Activated B cell treated with CpG ODN at 0.5 μM for 24 hours (primary cell): ENCODE measurements at regions of chrX and their contacts with region 1.

Region 1: DNA sequence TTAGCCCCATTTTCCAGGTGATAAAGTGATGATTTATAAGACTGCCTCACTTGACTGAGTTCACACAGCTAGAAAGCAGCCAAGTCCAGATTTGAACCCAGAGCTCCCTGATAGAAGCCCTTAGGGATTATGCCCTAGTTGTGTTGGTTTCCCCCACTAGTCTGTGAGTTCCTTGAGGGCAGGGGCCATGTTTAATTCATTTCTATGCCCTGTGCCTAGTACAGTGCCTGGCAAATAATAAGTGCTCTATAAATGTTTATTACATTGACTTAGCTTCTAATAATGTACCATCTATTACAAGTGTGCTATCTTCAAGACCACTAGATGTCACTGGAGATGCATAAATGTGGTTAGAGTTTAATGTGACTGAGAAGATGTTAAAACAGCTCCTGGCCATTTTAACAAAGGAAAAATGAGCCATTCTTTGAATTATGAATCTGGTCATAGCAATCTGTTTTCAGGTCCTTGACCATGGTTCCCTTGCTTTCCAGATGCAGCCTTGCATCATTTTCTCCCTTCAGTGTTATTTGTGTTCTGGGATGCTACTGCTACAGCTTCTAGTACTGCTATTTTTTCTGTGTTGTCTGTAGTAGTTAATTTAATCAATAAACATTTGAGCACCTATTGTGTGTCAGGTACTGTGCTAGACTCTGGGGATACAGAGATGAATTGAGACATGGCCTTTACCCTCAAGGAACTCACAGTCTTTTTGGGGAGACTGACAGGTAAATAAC is 43.2 kb downstream of the SLC9A6 start:
- DNase-seq: no peak
- ATAC-seq: no peak
- H3K4me3 Mint-ChIP-seq: no peak overlapping the region
- H3K27ac Mint-ChIP-seq: no peak overlapping the region
- H3K4me1 Mint-ChIP-seq: no peaks in the 10 kb centered on the region
- H3K27me3 Mint-ChIP-seq: no peaks in the 10 kb centered on the region
- CTCF ChIP-seq: no peak

Region 2: DNA sequence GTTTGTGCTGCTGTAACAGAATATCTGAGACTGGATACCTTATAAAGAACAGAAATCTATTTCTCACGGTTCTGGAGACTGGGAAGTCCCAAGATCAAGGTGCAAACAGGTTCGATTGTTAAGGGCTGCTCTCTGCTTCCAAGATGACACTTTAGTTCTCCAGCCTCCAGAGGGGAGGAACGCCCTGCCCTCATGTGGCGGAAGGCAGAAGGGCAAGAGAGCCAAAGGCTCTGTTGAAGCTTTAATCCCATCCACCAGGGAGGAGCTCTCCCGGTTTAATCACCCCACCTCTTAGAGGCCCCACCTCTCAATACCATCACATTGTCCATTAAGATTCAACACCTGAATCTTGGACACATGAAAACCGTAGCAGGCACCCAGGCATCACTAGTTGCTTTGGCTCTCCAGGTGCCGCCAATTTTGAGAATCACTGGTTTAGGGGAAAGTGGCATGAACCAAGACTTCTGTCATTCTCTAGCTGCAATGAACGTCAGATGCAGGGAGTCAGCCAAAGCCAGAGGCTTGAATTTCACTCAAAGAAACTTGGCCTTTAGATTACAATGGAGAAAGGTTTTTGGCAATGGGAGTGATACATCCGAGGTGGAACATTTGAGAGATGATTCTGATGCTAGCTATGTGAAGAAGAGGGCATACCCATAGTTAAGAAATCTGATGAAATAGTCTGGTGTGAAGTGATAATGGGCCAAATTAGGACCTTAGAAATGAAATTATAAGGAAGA is 134.6 kb after region 1 on chrX:
- CTCF ChIA-PET with region 1: interaction called, 44 read pairs
- POLR2A ChIA-PET with region 1: no interaction called
- intact Hi-C with region 1: loop called (anchors 1 kb)
- DNase-seq: peak; percentile 14
- ATAC-seq: peak; percentile 50
- H3K4me3 Mint-ChIP-seq: no peak overlapping the region
- H3K27ac Mint-ChIP-seq: no peak overlapping the region
- H3K4me1 Mint-ChIP-seq: no peaks in the 10 kb centered on the region
- H3K27me3 Mint-ChIP-seq: no peaks in the 10 kb centered on the region
- CTCF ChIP-seq: no peak

Region 3: GRCh38 chrX:136200466-136200865 is 172.0 kb after region 1 on chrX:
- CTCF ChIA-PET with region 1: interaction called, 9 read pairs
- POLR2A ChIA-PET with region 1: no interaction called
- intact Hi-C with region 1: loop called (anchors 2 kb)
- DNase-seq: no peak
- ATAC-seq: no peak
- H3K4me3 Mint-ChIP-seq: no peak overlapping the region
- H3K27ac Mint-ChIP-seq: no peak overlapping the region
- H3K4me1 Mint-ChIP-seq: peaks cover 12% of the 10 kb centered on the region
- H3K27me3 Mint-ChIP-seq: no peaks in the 10 kb centered on the region
- CTCF ChIP-seq: no peak

Region 4: GRCh38 chrX:136209016-136209738 is 180.8 kb after region 1 on chrX:
- CTCF ChIA-PET with region 1: interaction called, 21 read pairs
- POLR2A ChIA-PET with region 1: no interaction called
- intact Hi-C with region 1: loop called (anchors 1 kb)
- DNase-seq: no peak
- ATAC-seq: no peak
- H3K4me3 Mint-ChIP-seq: no peak overlapping the region
- H3K27ac Mint-ChIP-seq: no peak overlapping the region
- H3K4me1 Mint-ChIP-seq: peaks cover 44% of the 10 kb centered on the region
- H3K27me3 Mint-ChIP-seq: no peaks in the 10 kb centered on the region
- CTCF ChIP-seq: no peak

Region 5: DNA sequence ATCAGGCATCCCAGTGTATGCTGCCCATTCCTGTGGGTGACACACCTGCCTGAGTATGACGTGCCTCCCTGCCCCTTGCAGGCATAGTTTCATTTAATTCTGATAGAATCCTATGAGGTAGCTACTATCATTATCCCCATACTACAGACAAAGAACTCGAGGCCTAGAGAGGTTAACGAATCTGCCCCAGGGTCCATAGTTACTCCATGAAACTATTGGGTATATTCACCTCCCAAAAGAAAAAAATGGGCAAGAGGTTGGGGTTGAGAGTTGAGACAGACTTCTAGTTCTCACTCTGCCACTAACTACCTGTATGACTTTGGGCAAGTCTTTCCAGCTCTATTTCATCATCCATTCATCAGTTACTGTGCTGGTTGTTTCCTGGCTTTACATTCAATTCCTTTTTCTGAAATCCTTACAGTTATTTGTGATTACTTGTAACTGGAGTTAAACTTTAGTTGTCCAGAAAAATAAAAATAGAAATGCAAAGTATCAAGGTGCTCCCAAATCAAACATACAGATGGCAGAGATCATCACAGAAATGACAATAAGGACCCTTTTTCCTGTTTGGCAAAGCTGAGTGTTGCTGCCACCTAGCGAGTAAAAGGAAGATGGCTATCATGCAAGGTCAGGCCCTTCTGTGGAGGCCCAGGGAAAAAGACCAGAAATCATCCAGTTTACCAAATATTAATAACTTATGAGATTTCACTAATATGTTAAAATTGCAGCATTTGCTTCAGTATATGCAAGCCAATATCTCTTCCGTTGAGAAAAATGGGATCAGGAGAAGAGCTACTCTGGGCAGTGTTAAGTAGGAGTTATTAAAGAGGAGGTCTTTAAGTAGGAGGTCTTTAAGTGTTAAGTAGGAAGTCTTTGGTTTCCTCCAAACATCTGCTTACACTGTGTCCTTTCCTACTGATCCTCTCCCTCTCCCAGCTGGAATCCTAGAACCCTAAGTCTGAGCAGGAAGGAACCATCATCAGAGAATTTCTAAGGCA is 239.9 kb after region 1 on chrX:
- CTCF ChIA-PET with region 1: interaction called, 66 read pairs
- POLR2A ChIA-PET with region 1: no interaction called
- intact Hi-C with region 1: loop called (anchors 1 kb)
- DNase-seq: no peak
- ATAC-seq: peak; percentile 45
- H3K4me3 Mint-ChIP-seq: no peak overlapping the region
- H3K27ac Mint-ChIP-seq: no peak overlapping the region
- H3K4me1 Mint-ChIP-seq: peaks cover 8% of the 10 kb centered on the region
- H3K27me3 Mint-ChIP-seq: no peaks in the 10 kb centered on the region
- CTCF ChIP-seq: no peak

Region 6: GRCh38 chrX:136577552-136577951 is 549.1 kb after region 1 on chrX:
- CTCF ChIA-PET with region 1: interaction called, 11 read pairs
- POLR2A ChIA-PET with region 1: no interaction called
- intact Hi-C with region 1: loop called (anchors 1 kb)
- DNase-seq: peak; percentile 14
- ATAC-seq: peak; percentile 79
- H3K4me3 Mint-ChIP-seq: no peak overlapping the region
- H3K27ac Mint-ChIP-seq: no peak overlapping the region
- H3K4me1 Mint-ChIP-seq: no peaks in the 10 kb centered on the region
- H3K27me3 Mint-ChIP-seq: no peaks in the 10 kb centered on the region
- CTCF ChIP-seq: no peak

Region 7: DNA sequence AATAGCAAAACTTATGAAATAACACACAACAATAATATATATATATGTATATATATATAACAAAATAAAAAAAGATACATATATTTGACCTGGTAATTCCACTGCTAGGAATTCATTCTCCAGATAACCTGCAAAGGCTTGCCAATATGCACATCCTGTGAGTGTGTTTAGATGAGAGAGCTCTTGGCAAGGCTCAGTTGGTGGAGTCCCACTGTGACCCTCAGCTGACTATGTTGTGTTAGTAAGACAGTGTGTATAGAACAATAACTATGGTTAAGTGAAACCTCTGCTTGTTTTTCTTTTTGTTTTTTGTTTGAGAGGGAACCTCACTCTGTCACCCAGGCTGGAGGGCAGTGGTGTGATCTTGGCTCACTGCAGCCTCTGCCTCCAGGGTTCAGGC is 891.6 kb after region 1 on chrX:
- CTCF ChIA-PET with region 1: interaction called, 3 read pairs
- POLR2A ChIA-PET with region 1: no interaction called
- intact Hi-C with region 1: loop called (anchors 10 kb)
- DNase-seq: no peak
- ATAC-seq: no peak
- H3K4me3 Mint-ChIP-seq: no peak overlapping the region
- H3K27ac Mint-ChIP-seq: no peak overlapping the region
- H3K4me1 Mint-ChIP-seq: peaks cover 1% of the 10 kb centered on the region
- H3K27me3 Mint-ChIP-seq: no peaks in the 10 kb centered on the region
- CTCF ChIP-seq: no peak

Region 8: GRCh38 chrX:137166591-137166990 is 1138.2 kb after region 1 on chrX:
- CTCF ChIA-PET with region 1: no interaction called
- POLR2A ChIA-PET with region 1: no interaction called
- intact Hi-C with region 1: no loop called
- DNase-seq: no peak
- ATAC-seq: no peak
- H3K4me3 Mint-ChIP-seq: no peak overlapping the region
- H3K27ac Mint-ChIP-seq: no peak overlapping the region
- H3K4me1 Mint-ChIP-seq: no peaks in the 10 kb centered on the region
- H3K27me3 Mint-ChIP-seq: no peaks in the 10 kb centered on the region
- CTCF ChIP-seq: no peak